Activated CD8-positive, alpha-beta memory T cell treated with anti-CD3 and anti-CD28 coated beads, Interleukin-2, amount 10 ng/mL, durations not matched to agents 7 days and 5 days (primary cell): ENCODE measurements at regions of chr3 and their contacts with region 1.

Region 1: GRCh38 chr3:56988458-56989168 is 71.9 kb upstream of the SPATA12 start:
- DNase-seq: peak; percentile 74
- ATAC-seq: peak; percentile 73
- H3K4me3 Mint-ChIP-seq: no peak overlapping the region
- H3K27ac Mint-ChIP-seq: no peak overlapping the region
- H3K4me1 Mint-ChIP-seq: peaks cover 25% of the 10 kb centered on the region
- H3K27me3 Mint-ChIP-seq: peaks cover 24% of the 10 kb centered on the region

Region 2: DNA sequence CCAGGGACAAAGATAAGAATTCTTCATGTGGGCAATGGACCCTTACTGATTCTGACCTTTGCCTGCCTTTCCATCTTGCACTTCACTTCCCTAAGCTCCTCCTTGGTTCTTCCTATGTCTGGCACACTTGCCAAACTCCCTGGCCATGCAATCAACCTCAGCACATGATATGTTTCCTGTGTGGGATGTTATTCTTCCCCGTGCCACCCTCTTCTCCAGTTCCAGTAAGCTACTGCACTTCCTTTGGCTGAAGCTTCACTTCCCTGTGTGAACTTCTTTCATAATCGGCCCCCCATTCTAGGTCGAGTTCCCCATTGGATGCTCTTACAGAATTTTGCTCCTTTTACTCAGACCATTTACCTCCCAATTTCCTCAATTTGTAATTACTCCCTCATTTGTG is 294.9 kb before region 1 on chr3:
- CTCF ChIA-PET with region 1: interaction called, 193 read pairs
- DNase-seq: no peak
- ATAC-seq: peak; percentile 17
- H3K4me3 Mint-ChIP-seq: peak overlapping the region; percentile 70
- H3K27ac Mint-ChIP-seq: peak overlapping the region; percentile 93
- H3K4me1 Mint-ChIP-seq: peaks cover 43% of the 10 kb centered on the region
- H3K27me3 Mint-ChIP-seq: no peaks in the 10 kb centered on the region

Region 3: DNA sequence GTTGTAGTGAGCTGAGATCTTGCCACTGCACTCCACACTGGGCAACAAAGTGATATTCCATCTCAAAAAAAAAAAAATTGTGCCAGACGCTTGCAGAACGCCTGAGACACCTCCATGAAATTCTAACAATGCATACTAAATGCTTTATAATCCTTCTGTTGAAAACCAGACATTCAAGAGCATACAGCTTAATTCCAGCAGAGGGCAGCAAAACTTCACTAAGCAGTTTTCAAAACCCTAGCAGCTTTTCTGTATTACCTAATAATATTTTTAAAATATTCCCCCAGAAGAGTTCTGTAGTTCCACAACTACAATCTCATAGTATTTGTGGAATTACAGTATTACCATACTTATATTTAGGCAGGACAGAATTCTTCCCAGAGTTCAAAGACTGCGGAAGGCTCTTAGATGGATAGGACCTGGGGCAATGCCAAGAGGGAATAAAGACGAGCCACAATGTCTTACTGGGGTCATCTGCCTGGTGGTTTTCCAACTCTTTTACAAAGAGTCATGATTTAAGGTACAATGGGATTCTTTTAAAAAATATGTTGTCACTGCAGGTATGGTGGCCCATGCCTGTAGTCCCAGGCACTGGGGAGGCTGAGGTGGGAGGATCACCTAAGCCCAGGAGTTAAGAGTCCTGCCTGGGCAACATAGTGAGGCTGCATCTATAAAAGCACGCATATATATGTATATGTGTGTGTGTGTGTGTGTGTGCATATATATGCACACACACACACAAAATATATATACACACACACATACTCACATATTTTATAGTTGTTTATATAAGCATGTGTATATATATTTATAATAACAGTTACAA is 285.9 kb before region 1 on chr3:
- CTCF ChIA-PET with region 1: interaction called, 193 read pairs
- DNase-seq: peak; percentile 65
- ATAC-seq: peak; percentile 58
- H3K4me3 Mint-ChIP-seq: no peak overlapping the region
- H3K27ac Mint-ChIP-seq: peak overlapping the region; percentile 39
- H3K4me1 Mint-ChIP-seq: peaks cover 23% of the 10 kb centered on the region
- H3K27me3 Mint-ChIP-seq: no peaks in the 10 kb centered on the region

Region 4: DNA sequence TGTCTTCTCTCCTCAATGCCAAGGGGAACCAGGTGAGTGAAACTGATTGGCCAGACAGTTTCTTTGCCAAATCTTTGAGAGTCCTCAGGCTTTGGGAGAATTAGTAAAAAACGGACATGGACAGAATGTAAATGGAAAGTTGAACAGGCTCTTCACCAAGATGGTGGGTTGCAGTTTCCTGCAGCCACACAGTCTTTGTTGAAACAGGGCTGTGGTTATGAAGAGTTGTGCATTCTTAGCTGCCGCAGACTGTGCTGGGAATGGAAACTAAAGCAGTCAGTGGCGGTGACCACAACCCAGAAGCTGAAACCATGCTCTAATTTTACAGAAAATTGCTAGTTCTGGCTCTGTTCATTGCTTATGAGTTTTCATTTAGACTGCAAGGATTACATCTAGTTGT is 263.4 kb before region 1 on chr3:
- CTCF ChIA-PET with region 1: interaction called, 19 read pairs
- DNase-seq: peak; percentile 91
- ATAC-seq: peak; percentile 89
- H3K4me3 Mint-ChIP-seq: peak overlapping the region; percentile 62
- H3K27ac Mint-ChIP-seq: peak overlapping the region; percentile 95
- H3K4me1 Mint-ChIP-seq: peaks cover 58% of the 10 kb centered on the region
- H3K27me3 Mint-ChIP-seq: no peaks in the 10 kb centered on the region

Region 5: GRCh38 chr3:56783644-56784447 is 204.8 kb before region 1 on chr3:
- CTCF ChIA-PET with region 1: interaction called, 28 read pairs
- DNase-seq: peak; percentile 92
- ATAC-seq: peak; percentile 80
- H3K4me3 Mint-ChIP-seq: peak overlapping the region; percentile 58
- H3K27ac Mint-ChIP-seq: peak overlapping the region; percentile 92
- H3K4me1 Mint-ChIP-seq: peaks cover 96% of the 10 kb centered on the region
- H3K27me3 Mint-ChIP-seq: no peaks in the 10 kb centered on the region

Region 6: DNA sequence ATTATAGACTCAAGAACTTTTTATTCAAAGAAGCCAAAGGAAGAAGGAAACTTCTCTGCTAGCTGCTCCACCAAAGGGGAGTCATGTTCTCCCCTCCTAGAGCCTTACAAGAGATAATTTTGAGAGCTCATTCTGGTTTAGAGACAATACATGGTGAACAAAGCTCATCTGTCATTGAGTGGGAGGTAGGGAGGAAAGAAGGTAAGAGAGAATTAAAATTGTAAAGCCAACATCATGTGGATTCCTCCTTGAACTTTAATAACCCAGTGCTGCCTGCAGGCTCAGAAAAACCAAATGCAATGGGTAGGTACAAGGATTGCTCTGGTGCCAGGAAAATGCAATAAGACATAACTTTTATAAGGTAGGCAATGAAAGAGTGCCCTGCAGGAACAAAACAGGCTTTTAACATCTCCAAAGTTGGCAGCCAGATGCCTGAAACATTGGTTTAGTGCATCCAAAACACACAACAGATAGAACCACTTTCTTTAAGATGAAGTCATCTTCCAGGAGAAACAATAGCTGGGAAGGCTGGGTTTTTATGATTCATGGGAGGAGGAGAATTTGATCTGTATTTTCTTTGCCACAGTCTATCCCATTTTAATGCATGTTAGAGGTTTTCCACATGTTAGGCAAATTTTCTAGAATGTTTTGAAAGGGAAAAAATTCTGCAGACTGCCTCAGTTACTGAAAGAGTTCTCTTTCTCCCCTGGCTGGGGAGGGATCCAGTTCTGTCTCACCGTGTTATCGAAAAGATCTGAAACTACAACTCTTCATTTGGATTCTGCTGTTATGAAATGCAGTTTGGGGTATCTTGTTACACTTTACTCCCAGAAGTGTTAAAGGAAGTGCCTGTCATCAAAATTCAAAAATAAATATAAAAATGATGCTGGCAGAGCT is 175.6 kb before region 1 on chr3:
- CTCF ChIA-PET with region 1: interaction called, 15 read pairs
- DNase-seq: no peak
- ATAC-seq: no peak
- H3K4me3 Mint-ChIP-seq: no peak overlapping the region
- H3K27ac Mint-ChIP-seq: no peak overlapping the region
- H3K4me1 Mint-ChIP-seq: peaks cover 28% of the 10 kb centered on the region
- H3K27me3 Mint-ChIP-seq: no peaks in the 10 kb centered on the region

Region 7: GRCh38 chr3:56915966-56916586 is 72.5 kb before region 1 on chr3:
- CTCF ChIA-PET with region 1: interaction called, 37 read pairs
- DNase-seq: peak; percentile 94
- ATAC-seq: peak; percentile 88
- H3K4me3 Mint-ChIP-seq: peak overlapping the region; percentile 96
- H3K27ac Mint-ChIP-seq: peak overlapping the region; percentile 100
- H3K4me1 Mint-ChIP-seq: peaks cover 68% of the 10 kb centered on the region
- H3K27me3 Mint-ChIP-seq: no peaks in the 10 kb centered on the region

Region 8: DNA sequence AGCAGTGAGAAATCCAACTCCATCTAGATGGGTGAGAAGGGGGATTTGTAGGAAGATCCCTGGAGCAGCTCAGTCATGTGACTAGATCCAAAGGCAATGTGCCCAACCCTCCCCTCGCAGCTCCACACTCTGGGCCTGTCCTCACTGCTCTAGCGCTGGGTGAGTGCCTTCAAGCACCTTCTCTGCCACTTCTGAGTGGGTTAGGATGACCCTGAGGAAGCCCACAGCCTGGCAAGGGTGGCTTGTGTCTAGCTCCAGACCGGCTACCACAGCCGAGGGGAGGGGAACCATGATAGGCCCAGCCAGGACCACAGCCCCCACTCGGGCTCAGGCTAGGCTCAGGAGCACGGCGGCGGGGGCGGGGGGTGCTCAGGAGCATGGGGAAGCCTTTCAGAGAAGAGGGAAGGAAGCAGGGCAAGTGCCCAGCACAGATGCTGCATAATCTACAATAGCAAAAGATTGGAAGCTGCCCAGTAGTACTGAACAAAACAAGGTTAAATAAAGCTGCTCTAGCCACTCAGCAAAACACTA is 73.6 kb after region 1 on chr3:
- CTCF ChIA-PET with region 1: no interaction called
- DNase-seq: no peak
- ATAC-seq: no peak
- H3K4me3 Mint-ChIP-seq: no peak overlapping the region
- H3K27ac Mint-ChIP-seq: no peak overlapping the region
- H3K4me1 Mint-ChIP-seq: peaks cover 7% of the 10 kb centered on the region
- H3K27me3 Mint-ChIP-seq: peaks cover 3% of the 10 kb centered on the region